ENCODE measurements at regions of chr1 and their contacts with region 1.

Region 1: GRCh38 chr1:85276215-85276977 is at the start of gene BCL10:
- DNase-seq: peak; percentile 99
- H3K4me3 Mint-ChIP-seq: peak within 1 kb of the TSS; percentile 80
- H3K27ac Mint-ChIP-seq: peak within 1 kb of the TSS; percentile 80
- H3K4me1 Mint-ChIP-seq: peaks cover 53% of the 10 kb centered on the region
- H3K27me3 Mint-ChIP-seq: peaks cover 26% of the 10 kb centered on the region
- total RNA-seq, gene BCL10: 24.3 to 30.1 TPM

Region 2: DNA sequence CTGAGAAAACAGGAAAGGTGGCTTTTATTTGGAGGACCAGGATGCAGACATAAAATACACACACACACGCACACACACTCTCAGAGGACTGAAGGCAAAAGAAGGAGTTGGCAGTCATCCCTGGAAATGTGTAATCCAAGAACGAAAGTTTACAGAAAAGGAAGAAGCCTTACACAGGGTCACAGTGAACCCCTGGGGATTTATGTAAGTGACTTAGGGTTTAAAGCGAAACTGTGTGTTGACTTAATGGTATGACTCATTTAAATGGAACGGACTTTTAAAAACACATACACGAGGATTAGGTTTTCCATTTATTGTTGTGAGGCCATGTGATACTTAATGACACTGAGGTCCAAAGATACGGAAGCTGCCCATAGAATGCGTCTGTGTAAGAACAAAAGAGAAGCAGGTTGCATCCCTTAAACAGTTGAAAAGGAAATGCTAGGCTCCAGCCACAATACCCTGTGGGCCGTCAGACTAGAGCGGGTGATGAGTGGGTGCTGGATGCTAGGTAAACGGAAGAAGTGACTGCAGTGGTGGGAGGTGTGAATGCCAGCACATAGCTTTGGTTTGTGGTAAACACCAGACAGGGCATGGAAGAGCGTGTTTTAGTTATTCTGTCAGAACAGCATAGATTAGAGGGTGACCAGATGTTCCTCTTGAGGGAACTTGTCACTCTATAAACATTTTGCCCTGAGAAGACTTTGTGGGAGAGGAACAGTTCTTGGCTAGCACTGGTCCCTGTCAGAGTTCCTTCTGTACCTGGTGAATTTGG is 21.6 kb after region 1 on chr1:
- CTCF ChIA-PET with region 1: interaction called, 10 read pairs
- POLR2A ChIA-PET with region 1: interaction called, 19 read pairs
- DNase-seq: peak; percentile 79
- H3K4me3 Mint-ChIP-seq: peak overlapping the region; percentile 11
- H3K27ac Mint-ChIP-seq: peak overlapping the region; percentile 5
- H3K4me1 Mint-ChIP-seq: peaks cover 21% of the 10 kb centered on the region
- H3K27me3 Mint-ChIP-seq: peaks cover 43% of the 10 kb centered on the region